ENCODE measurements at regions of chr9 and their contacts with region 1.

Region 1: DNA sequence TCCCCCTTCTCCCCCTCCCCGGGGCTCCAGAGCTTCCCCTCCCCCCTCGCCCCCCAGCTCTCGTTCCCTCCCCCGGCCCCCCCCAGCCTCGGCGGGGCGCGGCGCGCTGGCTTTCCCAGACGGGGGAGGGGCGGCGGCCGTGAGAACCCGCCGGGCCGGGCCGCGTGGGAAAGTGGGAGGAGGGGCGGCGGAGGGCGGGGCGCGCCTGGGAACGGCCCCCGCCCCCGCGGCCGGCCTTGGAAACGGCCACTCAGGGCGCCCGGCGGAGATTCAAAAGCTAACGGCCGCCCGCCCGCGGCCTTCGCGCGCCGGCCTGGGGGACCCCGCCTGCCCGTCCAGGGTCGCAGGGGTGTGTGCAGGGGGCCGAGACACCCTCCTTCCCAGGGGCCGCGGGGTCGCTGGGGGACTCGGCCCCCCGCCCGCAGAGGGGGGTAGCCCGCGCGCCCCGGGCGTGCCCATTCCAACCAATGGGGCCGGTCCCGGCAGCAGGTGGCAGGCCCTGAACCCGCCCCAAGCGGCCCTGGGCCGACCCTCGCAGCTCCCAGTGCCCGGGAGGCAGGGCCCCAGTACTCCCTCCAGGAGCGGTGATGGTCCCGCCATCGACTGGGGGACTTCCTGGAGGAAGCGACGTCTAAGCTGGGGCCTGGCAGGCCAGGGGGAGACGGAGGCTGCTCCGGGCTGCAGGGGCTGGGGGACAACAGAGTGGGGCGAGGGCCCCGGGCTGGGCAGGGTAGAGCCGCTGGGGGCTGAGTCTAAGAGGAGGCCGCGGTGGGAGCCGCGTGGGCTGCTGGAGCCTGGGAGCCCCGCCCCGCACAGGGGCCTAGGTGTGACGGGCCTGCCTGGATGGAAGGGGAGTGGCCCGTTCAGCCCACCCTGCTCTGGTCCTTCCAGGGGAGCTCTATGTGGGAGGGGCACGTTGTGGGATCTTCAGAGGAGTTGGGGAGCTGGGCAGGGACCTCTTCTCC is 14.2 kb upstream of the NRARP start:
- DNase-seq: peak; percentile 69
- H3K4me3 ChIP-seq: peak overlapping the region; percentile 24 to 48
- H3K27ac ChIP-seq: peak overlapping the region; percentile 18 to 45
- H3K4me1 ChIP-seq: peaks cover 13% of the 10 kb centered on the region
- H3K27me3 ChIP-seq: no peaks in the 10 kb centered on the region
- CTCF ChIP-seq: no peak
- POLR2A ChIP-seq: no peak

Region 2: DNA sequence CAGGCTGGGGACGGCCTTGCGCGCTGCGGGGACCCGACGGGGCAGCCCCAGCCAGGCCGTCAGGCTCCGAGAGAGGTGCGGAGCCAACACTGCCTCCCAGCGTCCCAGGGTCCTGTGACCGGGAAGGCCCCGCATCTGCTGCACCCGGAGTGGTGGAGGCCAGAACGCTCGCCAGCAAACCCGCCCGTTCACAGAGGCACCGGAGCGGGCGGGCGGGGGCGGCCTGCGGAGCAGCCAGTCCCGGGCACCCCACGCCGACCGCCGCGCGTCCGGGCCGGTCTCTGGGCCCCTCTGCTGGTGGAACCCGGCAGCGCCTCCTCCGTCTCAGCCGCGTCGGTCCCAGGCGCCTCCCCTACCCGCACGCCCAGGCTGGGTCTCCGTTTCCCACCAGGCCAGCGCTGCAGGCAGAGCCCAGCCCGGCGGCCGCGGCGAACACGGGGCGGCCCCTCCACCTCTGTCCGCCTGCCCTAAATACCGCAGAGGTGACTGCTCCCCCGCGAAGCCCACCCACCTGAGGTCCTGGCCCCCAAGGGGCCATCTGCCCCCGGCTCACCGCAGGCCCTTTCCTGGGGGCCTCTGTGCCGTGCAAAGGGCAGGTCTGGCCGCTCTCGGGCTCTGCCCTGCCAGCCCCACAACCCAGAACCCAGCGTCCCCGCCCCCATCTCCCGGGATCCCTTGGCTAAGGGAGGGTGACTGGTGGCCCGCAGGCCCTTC is 90.7 kb after region 1 on chr9:
- intact Hi-C with region 1: loop called (anchors 10 kb)
- DNase-seq: peak; percentile 68
- H3K4me3 ChIP-seq: peak overlapping the region; percentile 34 to 45
- H3K27ac ChIP-seq: peak overlapping the region; percentile 84
- H3K4me1 ChIP-seq: peaks cover 35% of the 10 kb centered on the region
- H3K27me3 ChIP-seq: no peaks in the 10 kb centered on the region
- CTCF ChIP-seq: peak; percentile 72 to 83 (median 77)
- POLR2A ChIP-seq: no peak